ENCODE measurements at regions of chr14 and their contacts with region 1.

Region 1: GRCh38 chr14:96676166-96676565 is 121.0 kb upstream of the VRK1 start:
- DNase-seq: no peak
- H3K4me3 ChIP-seq: no peak overlapping the region
- H3K27ac ChIP-seq: no peak overlapping the region
- H3K4me1 ChIP-seq: no peaks in the 10 kb centered on the region
- H3K27me3 ChIP-seq: peaks cover 2 to 20% (median 14%) of the 10 kb centered on the region in 4 experiments
- CTCF ChIP-seq: no peak
- EP300 ChIP-seq: no peak
- POLR2A ChIP-seq: no peak
- RAD21 ChIP-seq: no peak

Region 2: DNA sequence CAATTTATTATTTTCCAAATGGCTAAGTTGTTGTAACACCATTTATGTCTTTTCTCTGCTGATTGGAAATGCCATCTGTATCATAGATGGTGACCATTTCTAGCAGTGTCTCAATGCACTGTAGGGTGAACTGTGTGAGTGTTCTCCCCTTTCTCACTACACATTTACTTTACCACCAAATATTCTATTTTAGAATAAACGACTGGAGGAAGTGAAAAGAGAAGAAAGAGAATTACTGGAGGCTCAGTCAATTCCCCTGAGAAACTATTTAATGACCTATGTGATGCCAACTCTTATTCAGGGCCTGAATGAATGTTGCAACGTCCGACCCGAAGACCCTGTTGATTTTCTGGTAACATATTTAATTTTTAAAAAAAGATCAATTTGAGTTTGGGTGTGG is 189.5 kb before region 1 on chr14:
- CTCF ChIA-PET with region 1: no interaction called
- POLR2A ChIA-PET with region 1: no interaction called
- DNase-seq: no peak
- H3K4me3 ChIP-seq: no peak overlapping the region
- H3K27ac ChIP-seq: no peak overlapping the region
- H3K4me1 ChIP-seq: no peaks in the 10 kb centered on the region
- H3K27me3 ChIP-seq: no peaks in the 10 kb centered on the region
- CTCF ChIP-seq: no peak
- EP300 ChIP-seq: no peak
- POLR2A ChIP-seq: no peak
- RAD21 ChIP-seq: no peak

Region 3: DNA sequence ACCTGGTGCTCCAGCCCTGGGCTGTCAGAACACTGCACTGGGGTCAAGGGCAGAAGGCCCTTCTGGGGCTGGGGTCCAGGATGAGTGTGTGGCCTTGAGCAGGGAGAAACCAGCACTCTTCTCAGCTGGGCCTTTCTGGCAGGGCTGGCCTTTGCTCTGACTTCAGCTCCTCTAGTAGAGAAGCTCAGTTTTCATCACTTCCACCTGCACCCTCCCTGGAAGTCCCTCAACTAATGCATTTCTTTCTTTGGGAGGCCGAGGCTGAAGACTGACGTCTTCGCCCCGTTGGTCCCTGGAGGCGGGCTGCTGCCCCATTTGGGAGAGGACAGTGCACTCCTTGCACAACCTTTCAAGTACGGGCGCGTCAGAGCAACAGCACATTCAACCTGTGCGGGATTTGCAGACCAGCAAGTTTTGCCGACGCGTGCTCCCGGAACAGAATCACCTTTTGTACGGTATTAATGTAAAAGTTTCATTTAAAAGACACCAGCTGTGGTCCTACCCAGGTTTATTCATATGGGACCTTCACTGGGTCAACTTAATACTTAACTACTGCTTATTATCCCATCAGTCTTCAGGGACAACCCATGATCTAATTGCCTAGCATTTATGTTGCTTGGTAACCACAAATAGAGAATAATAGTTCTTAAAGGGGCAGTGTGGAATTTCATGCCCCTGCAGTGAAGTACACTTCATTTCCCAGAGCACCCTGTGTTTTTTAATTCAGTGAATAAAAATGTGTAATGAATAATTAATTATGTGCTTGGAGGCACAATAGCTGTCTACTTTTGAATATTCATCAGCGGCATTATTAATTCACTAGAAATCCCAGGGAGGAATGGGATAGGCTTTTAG is 13.8 kb before region 1 on chr14:
- CTCF ChIA-PET with region 1: interaction called, 10 read pairs
- POLR2A ChIA-PET with region 1: no interaction called
- DNase-seq: peak in 1 of 2 experiments; percentile 42
- H3K4me3 ChIP-seq: no peak overlapping the region
- H3K27ac ChIP-seq: no peak overlapping the region
- H3K4me1 ChIP-seq: peaks cover 0 to 11% (median 6%) of the 10 kb centered on the region in 4 experiments; a peak in 4 of 7 replicates
- H3K27me3 ChIP-seq: no peaks in the 10 kb centered on the region
- CTCF ChIP-seq: no peak
- EP300 ChIP-seq: no peak
- POLR2A ChIP-seq: no peak
- RAD21 ChIP-seq: no peak